ENCODE measurements at regions of chr5 and their contacts with region 1.

Region 1: DNA sequence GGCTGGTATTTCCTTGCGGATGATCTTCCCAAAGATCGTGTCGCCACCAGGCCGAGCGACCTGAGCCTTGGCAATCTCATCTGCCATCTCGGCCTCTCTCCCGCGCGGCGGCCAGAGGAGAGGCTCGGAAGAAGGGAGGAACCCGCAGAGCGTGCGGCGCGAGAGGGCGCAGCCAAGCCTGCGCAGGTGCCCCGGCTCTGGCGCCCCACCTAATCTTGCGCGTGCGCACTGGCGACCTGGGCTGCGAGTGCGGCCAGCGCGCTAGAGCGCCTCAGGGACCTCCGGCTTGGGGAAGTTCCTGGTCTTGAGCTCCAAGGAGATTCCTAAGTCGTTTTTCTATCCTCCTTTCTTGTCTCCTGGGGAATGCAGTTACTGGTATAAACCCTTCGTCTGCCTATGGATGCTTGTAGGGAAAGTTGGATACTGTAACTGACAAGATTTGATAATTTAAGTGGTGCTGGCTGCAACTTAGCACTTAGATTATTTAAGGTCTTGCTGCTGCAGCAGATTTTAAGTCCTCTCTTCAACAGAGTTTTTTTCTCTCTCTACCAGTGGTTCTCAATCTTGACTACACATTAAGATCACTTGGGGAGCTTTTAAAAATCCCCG is at the start of gene HINT1:
- DNase-seq: peak; percentile 98
- H3K4me3 ChIP-seq: peak within 1 kb of the TSS; percentile 68 to 94 (median 84)
- H3K27ac ChIP-seq: peak within 1 kb of the TSS; percentile 87 to 99 (median 98)
- H3K4me1 ChIP-seq: peaks cover 22 to 58% (median 46%) of the 10 kb centered on the region in 6 donors
- H3K27me3 ChIP-seq: no peaks in the 10 kb centered on the region
- CTCF ChIP-seq: peak in 3 of 11 experiments; percentile 12 to 34 (median 22)
- POLR2A ChIP-seq: peak in 1 of 3 donors; percentile 69
- total RNA-seq, gene HINT1: 130 to 185 (median 155) TPM

Region 2: DNA sequence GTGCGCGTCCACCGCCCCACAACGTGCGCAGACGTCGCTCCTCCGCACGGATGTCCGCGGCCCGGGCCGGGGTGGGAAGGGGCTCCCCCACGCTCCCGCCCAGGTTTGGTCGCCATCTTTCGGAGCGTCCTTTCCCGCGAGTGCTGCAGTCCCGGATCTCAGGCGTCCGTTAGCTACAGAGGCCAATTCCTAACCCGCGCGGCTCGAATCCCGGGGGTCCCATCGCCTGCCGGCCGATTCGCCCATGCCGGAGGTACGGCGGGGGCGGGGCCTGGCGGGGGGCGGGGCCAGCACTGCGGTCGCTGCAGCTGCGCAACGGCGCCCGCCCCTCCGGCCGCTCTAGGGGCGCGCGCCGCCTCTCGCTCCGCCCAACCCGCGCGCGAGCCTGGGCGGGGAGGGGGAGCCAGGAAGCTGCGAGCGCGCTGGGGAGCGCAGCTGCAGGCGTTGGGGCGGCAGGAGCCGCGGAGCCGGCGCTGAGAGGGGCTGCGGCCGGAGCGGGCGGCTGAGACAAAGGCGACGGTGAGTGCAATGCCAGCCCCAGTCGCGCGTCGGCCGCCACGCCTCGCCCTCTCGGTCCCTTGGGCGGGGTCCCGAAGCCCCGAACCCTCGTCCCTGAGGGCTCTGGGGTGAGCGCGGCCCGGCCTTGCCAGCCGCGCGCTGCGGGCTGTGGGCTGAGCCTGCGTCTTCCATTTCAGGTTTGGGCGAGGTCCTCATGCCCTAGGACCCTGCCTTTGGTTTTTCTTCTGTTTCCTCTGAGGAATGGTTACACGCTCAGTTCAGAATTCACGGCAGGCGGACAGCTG is 98.6 kb after region 1 on chr5 and contains the start of gene CDC42SE2:
- intact Hi-C with region 1: loop called (anchors 10 kb)
- DNase-seq: peak; percentile 98
- H3K4me3 ChIP-seq: peak within 1 kb of the TSS; percentile 61 to 91 (median 81)
- H3K27ac ChIP-seq: peak within 1 kb of the TSS; percentile 79 to 100 (median 99)
- H3K4me1 ChIP-seq: peaks cover 27 to 85% (median 69%) of the 10 kb centered on the region in 6 donors
- H3K27me3 ChIP-seq: no peaks in the 10 kb centered on the region
- CTCF ChIP-seq: peak in 5 of 11 experiments; percentile 10 to 34 (median 21)
- POLR2A ChIP-seq: peak; percentile 91 to 99 (median 95)
- total RNA-seq, gene CDC42SE2: 85.3 to 128 (median 113) TPM

Region 3: GRCh38 chr5:131382407-131383395 is 217.5 kb after region 1 on chr5:
- intact Hi-C with region 1: loop called (anchors 10 kb)
- DNase-seq: no peak
- H3K4me3 ChIP-seq: peak overlapping the region in 1 of 8 donors; percentile 3
- H3K27ac ChIP-seq: peak overlapping the region in 7 of 8 donors; percentile 89 to 96 (median 93)
- H3K4me1 ChIP-seq: peaks cover 53 to 97% (median 68%) of the 10 kb centered on the region in 6 donors
- H3K27me3 ChIP-seq: no peaks in the 10 kb centered on the region
- CTCF ChIP-seq: peak; percentile 31 to 74 (median 61)
- POLR2A ChIP-seq: no peak

Region 4: GRCh38 chr5:131417240-131417869 is 252.1 kb after region 1 on chr5:
- intact Hi-C with region 1: loop called (anchors 10 kb)
- DNase-seq: peak; percentile 90
- H3K4me3 ChIP-seq: peak overlapping the region in 1 of 8 donors; percentile 36
- H3K27ac ChIP-seq: peak overlapping the region in 3 of 8 donors; percentile 20 to 46 (median 26)
- H3K4me1 ChIP-seq: peaks cover 13 to 44% (median 24%) of the 10 kb centered on the region in 6 donors
- H3K27me3 ChIP-seq: no peaks in the 10 kb centered on the region
- CTCF ChIP-seq: peak; percentile 23 to 89 (median 77)
- POLR2A ChIP-seq: no peak